ENCODE measurements at regions of chr5 and their contacts with region 1.

Region 1: GRCh38 chr5:60295423-60295822 is 401.9 kb upstream of the PDE4D start:
- DNase-seq: no peak
- ATAC-seq: no peak
- H3K4me3 Mint-ChIP-seq: no peak overlapping the region
- H3K27ac Mint-ChIP-seq: no peak overlapping the region
- H3K4me1 Mint-ChIP-seq: no peaks in the 10 kb centered on the region
- H3K27me3 Mint-ChIP-seq: no peaks in the 10 kb centered on the region
- CTCF ChIP-seq: no peak

Region 2: DNA sequence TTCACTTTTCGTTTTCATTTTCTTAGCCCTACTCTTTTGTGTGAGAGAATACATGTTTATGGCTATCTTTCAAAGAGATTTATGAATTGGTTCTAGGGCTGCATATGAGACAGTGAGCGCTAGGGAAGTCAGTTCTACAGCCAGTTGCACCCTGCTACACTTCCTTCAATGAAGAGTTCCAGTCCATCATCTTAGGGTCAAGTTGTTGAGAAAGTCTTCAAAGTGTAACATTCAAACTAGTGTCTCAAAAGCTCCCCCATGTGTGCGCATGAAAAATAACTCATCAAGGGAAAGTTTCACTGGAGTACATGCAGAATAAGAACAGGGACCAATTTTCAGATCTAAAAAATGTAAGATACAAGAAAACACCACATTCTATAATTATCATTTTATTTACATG is 87.3 kb after region 1 on chr5:
- CTCF ChIA-PET with region 1: interaction called, 3 read pairs
- POLR2A ChIA-PET with region 1: no interaction called
- intact Hi-C with region 1: loop called (anchors 1 kb)
- DNase-seq: no peak
- ATAC-seq: no peak
- H3K4me3 Mint-ChIP-seq: no peak overlapping the region
- H3K27ac Mint-ChIP-seq: no peak overlapping the region
- H3K4me1 Mint-ChIP-seq: peaks cover 6% of the 10 kb centered on the region
- H3K27me3 Mint-ChIP-seq: no peaks in the 10 kb centered on the region
- CTCF ChIP-seq: no peak

Region 3: GRCh38 chr5:60649283-60649917 is 354.0 kb after region 1 on chr5:
- CTCF ChIA-PET with region 1: interaction called, 4 read pairs
- POLR2A ChIA-PET with region 1: no interaction called
- intact Hi-C with region 1: loop called (anchors 1 kb)
- DNase-seq: no peak
- ATAC-seq: no peak
- H3K4me3 Mint-ChIP-seq: no peak overlapping the region
- H3K27ac Mint-ChIP-seq: no peak overlapping the region
- H3K4me1 Mint-ChIP-seq: no peaks in the 10 kb centered on the region
- H3K27me3 Mint-ChIP-seq: no peaks in the 10 kb centered on the region
- CTCF ChIP-seq: peak; percentile 28

Region 4: GRCh38 chr5:60668686-60669304 is 373.4 kb after region 1 on chr5:
- CTCF ChIA-PET with region 1: interaction called, 9 read pairs
- POLR2A ChIA-PET with region 1: no interaction called
- intact Hi-C with region 1: loop called (anchors 2 kb)
- DNase-seq: no peak
- ATAC-seq: no peak
- H3K4me3 Mint-ChIP-seq: no peak overlapping the region
- H3K27ac Mint-ChIP-seq: no peak overlapping the region
- H3K4me1 Mint-ChIP-seq: no peaks in the 10 kb centered on the region
- H3K27me3 Mint-ChIP-seq: no peaks in the 10 kb centered on the region
- CTCF ChIP-seq: peak; percentile 25

Measured in activated B cell treated with CpG ODN at 0.5 μM for 24 hours (primary cell).